Right ventricle myocardium superior (tissue), 1 donor: ENCODE measurements at regions of chr10 and their contacts with region 1.

Region 1: DNA sequence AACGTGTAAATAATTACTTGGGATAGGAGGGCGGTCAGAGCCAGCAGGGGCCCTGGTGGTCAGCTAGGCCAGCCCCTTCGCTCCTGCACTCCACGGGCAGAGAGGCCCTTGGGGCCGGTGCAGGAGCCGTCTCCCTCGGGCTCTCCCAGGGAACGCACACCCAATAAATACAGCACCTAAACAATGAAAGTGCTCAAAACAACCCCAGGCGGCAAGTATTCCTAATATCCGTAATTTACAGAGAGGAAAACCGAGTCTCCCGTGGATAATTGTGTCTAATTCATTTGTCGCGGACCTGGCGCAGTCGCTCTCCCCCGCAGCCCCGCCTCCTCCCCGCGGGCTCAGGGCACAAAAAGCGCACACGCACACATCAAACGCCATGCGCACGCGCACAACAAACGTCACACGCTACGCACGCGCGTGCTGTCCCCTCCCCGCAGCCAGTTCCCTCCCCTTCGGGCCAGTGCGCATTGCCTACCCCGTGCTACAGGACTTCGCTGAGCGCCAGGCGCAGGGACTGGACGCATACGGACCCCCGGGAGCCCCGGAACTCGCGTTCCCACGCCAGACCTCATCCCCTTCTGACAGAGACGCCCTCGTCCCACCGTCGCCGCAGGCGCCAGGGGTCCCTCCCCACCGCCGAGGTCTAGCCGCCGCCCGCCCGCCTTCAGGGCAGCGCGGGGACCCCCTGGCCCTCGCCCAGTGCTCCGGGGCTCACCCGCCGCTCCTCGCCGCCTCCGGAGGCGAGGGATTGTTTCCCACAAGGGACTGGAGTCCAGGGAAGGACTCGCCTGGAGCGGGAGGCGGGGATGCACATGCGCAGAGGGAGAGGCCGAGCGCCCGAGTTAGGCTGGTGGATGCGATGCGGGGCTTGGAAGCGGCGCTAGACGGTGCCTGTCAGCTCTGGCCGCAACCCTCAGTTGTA is at the start of gene ZNF248:
- DNase-seq: peak; percentile 98
- ATAC-seq: peak; percentile 100
- total RNA-seq, gene ZNF248: 11.4 TPM

Region 2: DNA sequence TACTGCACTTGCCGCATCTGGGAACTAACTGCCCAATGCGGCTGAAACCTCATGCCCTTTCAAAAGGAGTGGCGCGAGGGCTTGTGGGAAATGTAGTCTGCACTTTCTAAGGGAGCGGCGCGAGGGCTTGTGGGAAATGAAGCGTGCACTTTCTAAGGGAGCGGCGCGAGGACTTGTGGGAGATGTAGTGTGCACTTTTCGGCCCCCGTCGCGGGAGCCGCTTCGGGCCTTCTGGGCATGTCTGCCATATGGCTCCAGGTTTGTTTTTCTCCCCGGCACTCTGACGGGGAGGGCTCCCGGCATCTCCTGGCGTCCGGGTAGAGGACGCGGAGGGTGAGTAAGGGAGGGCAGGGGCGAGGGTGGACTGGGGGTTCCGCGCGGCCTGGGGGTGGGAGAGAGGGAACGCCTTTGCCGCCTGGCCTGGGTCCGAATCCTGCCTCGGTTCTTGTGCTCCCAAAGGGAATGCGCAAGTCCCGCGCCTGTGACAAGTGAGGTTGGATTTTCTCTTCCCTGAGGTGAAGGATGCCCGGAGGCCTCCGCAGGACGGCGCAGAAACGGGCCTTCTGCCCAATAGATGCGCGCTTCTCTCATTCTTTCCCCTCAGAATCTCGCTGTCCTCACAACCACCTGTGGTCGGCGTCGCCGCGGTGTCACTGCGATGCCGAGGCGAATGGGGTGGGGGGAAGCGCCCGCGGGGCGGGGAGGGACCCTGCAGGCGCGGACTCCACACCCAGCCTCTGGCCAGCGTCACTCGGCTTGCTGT is 236.8 kb after region 1 on chr10 and contains the start of gene ZNF37A:
- intact Hi-C with region 1: loop called (anchors 5 kb)
- DNase-seq: peak; percentile 96
- ATAC-seq: peak; percentile 100
- total RNA-seq, gene ZNF37A: 10.0 TPM